Right ventricle myocardium inferior (tissue), 1 donor: ENCODE measurements at regions of chr17 and their contacts with region 1.

Region 1: GRCh38 chr17:17496189-17497064 is at the start of gene RASD1:
- DNase-seq: peak; percentile 96
- ATAC-seq: peak; percentile 90
- total RNA-seq, gene RASD1: 45.3 TPM

Region 2: GRCh38 chr17:17356149-17356930 is 140.1 kb before region 1 on chr17:
- intact Hi-C with region 1: loop called (anchors 1 kb)
- DNase-seq: no peak
- ATAC-seq: peak; percentile 89

Region 3: GRCh38 chr17:17476865-17477467 is 19.5 kb before region 1 on chr17 and contains the start of gene MED9:
- intact Hi-C with region 1: loop called (anchors 2 kb)
- DNase-seq: peak; percentile 97
- ATAC-seq: peak; percentile 98
- total RNA-seq, gene MED9: 40.4 TPM

Region 4: DNA sequence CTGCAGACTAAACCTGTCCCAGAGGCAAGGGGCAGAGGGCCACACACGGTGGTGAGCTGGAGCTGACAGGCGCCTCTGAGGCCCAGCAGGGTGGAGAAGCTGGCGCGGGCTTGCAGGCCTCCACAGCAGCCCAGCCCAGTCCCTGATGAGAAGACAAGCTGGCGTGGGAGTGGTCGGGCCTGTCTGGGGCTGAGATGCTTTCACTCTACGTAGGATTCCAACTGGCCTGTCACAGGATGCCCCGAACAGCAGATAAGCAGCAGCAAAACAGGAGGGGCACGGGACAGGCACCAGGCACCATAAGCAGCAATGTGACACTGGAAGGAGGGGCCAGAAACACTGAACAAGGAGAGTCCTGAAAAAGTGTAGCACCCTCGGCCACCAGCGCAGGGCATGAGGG is 54.9 kb after region 1 on chr17:
- intact Hi-C with region 1: loop called (anchors 5 kb)
- DNase-seq: peak; percentile 84
- ATAC-seq: peak; percentile 78

Region 5: GRCh38 chr17:17641621-17642409 is 145.4 kb after region 1 on chr17:
- intact Hi-C with region 1: loop called (anchors 5 kb)
- DNase-seq: peak; percentile 88
- ATAC-seq: peak; percentile 90

Region 6: GRCh38 chr17:17653343-17653742 is 156.9 kb after region 1 on chr17:
- intact Hi-C with region 1: no loop called
- DNase-seq: no peak
- ATAC-seq: no peak